Activated CD8-positive, alpha-beta memory T cell treated with anti-CD3 and anti-CD28 coated beads, Interleukin-2, amount 10 ng/mL, durations not matched to agents 7 days and 5 days (primary cell): ENCODE measurements at regions of chr11 and their contacts with region 1.

Region 1: GRCh38 chr11:14892036-14892567 is at the start of gene CYP2R1:
- DNase-seq: peak; percentile 97
- ATAC-seq: peak; percentile 95
- H3K4me3 Mint-ChIP-seq: peak within 1 kb of the TSS; percentile 92
- H3K27ac Mint-ChIP-seq: peak within 1 kb of the TSS; percentile 93
- H3K4me1 Mint-ChIP-seq: peaks cover 49% of the 10 kb centered on the region
- H3K27me3 Mint-ChIP-seq: no peaks in the 10 kb centered on the region
- total RNA-seq, gene CYP2R1: 11.7 to 16.6 TPM

Region 2: DNA sequence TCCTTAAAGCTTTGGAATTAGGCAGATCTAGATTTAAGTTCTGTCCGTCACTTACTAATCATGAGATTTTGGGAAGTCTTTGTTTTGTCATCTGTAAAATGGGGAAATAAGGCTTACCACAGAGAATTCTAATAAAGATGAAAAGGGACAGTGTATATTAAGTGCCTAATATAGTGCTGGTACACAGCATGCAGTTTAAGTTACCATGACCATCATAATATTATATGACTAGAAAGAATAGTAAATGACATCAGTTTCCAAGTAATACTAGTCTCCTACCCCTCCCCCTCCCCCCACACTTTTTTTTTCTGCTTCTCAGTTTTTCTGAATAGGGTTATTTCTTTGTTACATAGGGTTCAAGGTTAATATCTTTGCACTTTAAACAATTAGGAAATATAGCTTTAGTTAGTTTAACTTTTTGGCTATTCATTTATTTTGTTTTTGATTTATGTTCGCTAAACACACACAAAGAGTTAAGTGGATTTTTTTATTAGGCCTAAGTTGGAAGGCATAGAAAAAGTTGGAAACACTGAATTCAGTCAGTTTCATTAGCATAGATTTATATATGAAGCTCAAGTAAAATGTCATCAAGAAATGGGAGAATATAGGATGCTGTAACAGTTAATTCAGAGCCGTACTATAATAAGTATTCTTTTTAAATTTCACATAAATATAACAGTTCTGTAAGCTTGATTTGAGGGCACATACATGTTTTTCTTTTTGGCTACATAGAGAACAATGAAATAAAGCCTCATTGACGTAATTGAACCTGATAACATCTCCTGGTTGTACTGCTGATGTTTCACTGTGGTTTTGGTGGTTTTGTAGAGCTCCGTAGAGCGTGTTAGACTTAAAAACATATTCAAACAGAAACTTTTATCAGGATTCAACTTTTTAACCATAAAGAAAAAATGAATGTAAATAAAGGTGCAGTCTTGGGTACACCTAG is 127.2 kb before region 1 on chr11:
- CTCF ChIA-PET with region 1: interaction called, 10 read pairs
- DNase-seq: peak; percentile 73
- ATAC-seq: peak; percentile 80
- H3K4me3 Mint-ChIP-seq: peak overlapping the region; percentile 50
- H3K27ac Mint-ChIP-seq: no peak overlapping the region
- H3K4me1 Mint-ChIP-seq: peaks cover 46% of the 10 kb centered on the region
- H3K27me3 Mint-ChIP-seq: no peaks in the 10 kb centered on the region

Region 3: GRCh38 chr11:14789879-14790484 is 102.1 kb before region 1 on chr11:
- CTCF ChIA-PET with region 1: interaction called, 10 read pairs
- DNase-seq: no peak
- ATAC-seq: no peak
- H3K4me3 Mint-ChIP-seq: no peak overlapping the region
- H3K27ac Mint-ChIP-seq: no peak overlapping the region
- H3K4me1 Mint-ChIP-seq: peaks cover 9% of the 10 kb centered on the region
- H3K27me3 Mint-ChIP-seq: no peaks in the 10 kb centered on the region

Region 4: GRCh38 chr11:14809466-14809865 is 82.6 kb before region 1 on chr11:
- CTCF ChIA-PET with region 1: no interaction called
- DNase-seq: no peak
- ATAC-seq: peak; percentile 39
- H3K4me3 Mint-ChIP-seq: no peak overlapping the region
- H3K27ac Mint-ChIP-seq: no peak overlapping the region
- H3K4me1 Mint-ChIP-seq: peaks cover 8% of the 10 kb centered on the region
- H3K27me3 Mint-ChIP-seq: no peaks in the 10 kb centered on the region

Region 5: GRCh38 chr11:14954581-14954980 is 62.5 kb after region 1 on chr11:
- CTCF ChIA-PET with region 1: no interaction called
- DNase-seq: no peak
- ATAC-seq: no peak
- H3K4me3 Mint-ChIP-seq: no peak overlapping the region
- H3K27ac Mint-ChIP-seq: no peak overlapping the region
- H3K4me1 Mint-ChIP-seq: no peaks in the 10 kb centered on the region
- H3K27me3 Mint-ChIP-seq: peaks cover 5% of the 10 kb centered on the region

Region 6: GRCh38 chr11:15053191-15053685 is 161.1 kb after region 1 on chr11:
- CTCF ChIA-PET with region 1: no interaction called
- DNase-seq: no peak
- ATAC-seq: peak; percentile 49
- H3K4me3 Mint-ChIP-seq: no peak overlapping the region
- H3K27ac Mint-ChIP-seq: no peak overlapping the region
- H3K4me1 Mint-ChIP-seq: peaks cover 4% of the 10 kb centered on the region
- H3K27me3 Mint-ChIP-seq: peaks cover 3% of the 10 kb centered on the region